ENCODE measurements at regions of chr4 and their contacts with region 1.

Region 1: DNA sequence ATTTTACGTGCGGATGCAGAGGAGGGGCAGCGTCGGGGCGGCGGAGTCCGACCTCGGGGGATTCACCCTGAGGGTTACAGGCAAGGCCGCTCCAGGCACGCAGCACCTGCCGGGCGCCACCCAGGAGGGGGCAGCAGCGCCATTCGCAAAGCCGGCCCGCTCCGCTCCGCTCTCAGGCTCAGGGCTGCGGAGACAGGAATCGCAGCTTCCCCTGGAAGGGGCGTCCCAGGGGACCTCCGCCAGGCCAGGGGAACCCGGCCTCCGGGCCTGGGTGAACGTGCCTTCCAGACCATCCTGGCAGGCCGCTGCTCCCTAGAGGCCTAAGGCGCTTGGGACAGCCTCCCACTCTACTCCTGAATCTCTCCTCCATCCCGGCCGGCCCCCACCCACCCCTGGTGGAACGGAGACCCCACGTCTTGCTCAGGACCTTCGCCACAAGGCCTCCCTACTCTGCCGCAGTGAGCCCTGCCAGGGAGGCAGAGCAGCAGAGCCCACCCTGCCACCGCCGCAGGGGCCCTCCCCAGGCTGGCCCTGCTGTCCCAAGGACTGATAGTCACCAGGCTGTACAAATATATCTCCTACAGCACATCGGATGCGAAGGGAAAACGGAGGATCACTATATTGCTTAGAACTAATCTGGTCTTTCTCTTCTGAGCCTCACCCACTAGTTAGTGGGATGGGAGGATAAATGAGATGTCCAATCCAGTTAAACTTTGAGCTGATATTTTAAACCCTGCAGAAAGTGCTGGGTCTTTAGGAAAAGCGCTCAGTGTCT is 115.0 kb downstream of the SMIM20 start:
- DNase-seq: peak; percentile 76
- H3K4me3 Mint-ChIP-seq: no peak overlapping the region
- H3K27ac Mint-ChIP-seq: no peak overlapping the region
- H3K4me1 Mint-ChIP-seq: peaks cover 16% of the 10 kb centered on the region
- H3K27me3 Mint-ChIP-seq: no peaks in the 10 kb centered on the region

Region 2: GRCh38 chr4:26105815-26106699 is 77.1 kb after region 1 on chr4:
- CTCF ChIA-PET with region 1: no interaction called
- POLR2A ChIA-PET with region 1: no interaction called
- DNase-seq: no peak
- H3K4me3 Mint-ChIP-seq: no peak overlapping the region
- H3K27ac Mint-ChIP-seq: no peak overlapping the region
- H3K4me1 Mint-ChIP-seq: peaks cover 33% of the 10 kb centered on the region
- H3K27me3 Mint-ChIP-seq: no peaks in the 10 kb centered on the region

Region 3: GRCh38 chr4:26410385-26411293 is 381.7 kb after region 1 on chr4:
- CTCF ChIA-PET with region 1: interaction called, 21 read pairs
- POLR2A ChIA-PET with region 1: no interaction called
- DNase-seq: no peak
- H3K4me3 Mint-ChIP-seq: no peak overlapping the region
- H3K27ac Mint-ChIP-seq: no peak overlapping the region
- H3K4me1 Mint-ChIP-seq: peaks cover 13% of the 10 kb centered on the region
- H3K27me3 Mint-ChIP-seq: no peaks in the 10 kb centered on the region